WTC11 (cell line): ENCODE measurements at regions of chr6 and their contacts with region 1.

Region 1: GRCh38 chr6:138001750-138002349 is 105.4 kb downstream of the PERP start:
- DNase-seq: peak; percentile 63
- ATAC-seq: 0 out of 2 replicates have a peak, but pooled peaks have one; percentile 36
- H3K4me3 Mint-ChIP-seq: no peak overlapping the region
- H3K27ac Mint-ChIP-seq: no peak overlapping the region
- H3K4me1 Mint-ChIP-seq: peaks cover 19% of the 10 kb centered on the region
- H3K27me3 Mint-ChIP-seq: no peaks in the 10 kb centered on the region
- CTCF ChIP-seq: peak; percentile 65

Region 2: DNA sequence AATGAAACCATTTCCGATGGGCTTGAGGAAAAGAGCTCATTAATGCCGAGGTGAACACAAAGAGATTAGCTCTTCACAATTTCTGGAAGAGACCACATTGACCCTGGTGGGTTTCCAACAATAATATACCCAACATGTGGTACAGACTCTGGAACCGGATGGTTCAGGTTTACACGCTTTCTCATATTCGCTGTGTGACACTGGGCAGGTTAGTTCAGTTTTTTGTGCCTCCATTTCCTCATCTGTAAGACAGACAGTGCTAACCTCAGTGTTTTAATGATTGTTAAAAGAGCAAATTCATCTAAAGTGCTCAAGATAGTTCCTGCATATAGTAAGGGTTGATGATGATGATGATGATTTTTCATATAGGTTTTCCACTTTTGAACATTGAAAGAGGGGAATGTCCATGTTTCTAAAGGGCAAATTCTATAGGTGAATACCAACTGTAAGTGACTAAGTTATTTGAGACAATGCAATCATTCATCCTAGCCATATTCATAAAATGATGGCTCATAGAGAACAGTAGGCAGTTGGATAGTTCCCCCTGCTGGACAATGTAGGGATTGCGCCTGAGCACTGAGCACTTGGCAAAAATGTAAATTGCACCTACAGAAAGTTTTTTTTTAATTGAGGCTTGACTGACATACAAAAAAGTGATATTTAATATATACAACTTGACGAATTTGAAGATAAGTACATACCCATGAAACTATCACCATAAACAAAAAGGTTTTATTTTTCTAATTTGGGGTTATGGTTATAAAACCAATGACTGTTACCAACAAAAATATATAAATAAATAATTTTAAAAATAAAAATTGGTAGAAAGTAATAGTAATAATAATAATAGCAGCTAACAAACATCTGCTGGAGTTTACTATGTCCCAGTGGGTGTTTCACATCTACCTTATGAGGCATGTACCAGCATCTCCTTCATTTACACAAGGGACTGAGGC is 107.5 kb after region 1 on chr6:
- CTCF ChIA-PET with region 1: interaction called, 30 read pairs
- POLR2A ChIA-PET with region 1: no interaction called
- DNase-seq: peak; percentile 74
- ATAC-seq: no peak
- H3K4me3 Mint-ChIP-seq: 0 out of 2 replicates have a peak overlapping the region, but pooled peaks have one; percentile 23
- H3K27ac Mint-ChIP-seq: no peak overlapping the region
- H3K4me1 Mint-ChIP-seq: peaks cover 20% of the 10 kb centered on the region
- H3K27me3 Mint-ChIP-seq: peaks cover 6% of the 10 kb centered on the region
- CTCF ChIP-seq: peak; percentile 88